Posterior cingulate gyrus (tissue), 11 donors: ENCODE measurements at regions of chr1 and their contacts with region 1.

Region 1: DNA sequence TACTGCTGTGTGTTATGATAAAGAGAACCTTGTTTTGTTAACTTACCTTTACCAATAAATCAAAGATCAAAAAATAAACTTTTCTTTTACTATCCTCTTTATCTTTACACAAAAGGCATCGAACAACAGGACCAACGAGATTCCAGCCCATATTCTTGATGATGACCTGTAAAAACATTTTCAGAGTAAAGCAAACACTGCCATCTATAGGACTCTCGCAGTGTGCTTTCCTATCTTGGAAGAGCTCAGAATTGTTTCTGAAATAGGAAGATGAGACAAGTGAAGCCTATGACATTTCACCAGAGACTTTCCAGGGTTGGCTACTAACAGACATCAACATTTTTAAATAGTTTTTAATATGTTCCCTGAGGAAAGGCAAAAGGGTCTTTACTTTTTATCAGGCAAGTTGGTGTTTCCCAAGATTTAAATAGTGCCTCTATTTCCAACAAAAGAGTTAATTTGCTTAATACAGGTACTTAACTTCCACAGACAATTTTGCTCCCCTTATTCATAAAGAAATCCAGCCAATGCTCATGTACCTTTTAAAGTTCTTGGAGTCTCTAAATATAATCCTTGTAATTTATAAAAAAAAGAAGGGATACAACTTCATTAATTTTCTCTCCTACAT is 7.3 kb downstream of the GLMN start:
- DNase-seq: no peak

Region 2: DNA sequence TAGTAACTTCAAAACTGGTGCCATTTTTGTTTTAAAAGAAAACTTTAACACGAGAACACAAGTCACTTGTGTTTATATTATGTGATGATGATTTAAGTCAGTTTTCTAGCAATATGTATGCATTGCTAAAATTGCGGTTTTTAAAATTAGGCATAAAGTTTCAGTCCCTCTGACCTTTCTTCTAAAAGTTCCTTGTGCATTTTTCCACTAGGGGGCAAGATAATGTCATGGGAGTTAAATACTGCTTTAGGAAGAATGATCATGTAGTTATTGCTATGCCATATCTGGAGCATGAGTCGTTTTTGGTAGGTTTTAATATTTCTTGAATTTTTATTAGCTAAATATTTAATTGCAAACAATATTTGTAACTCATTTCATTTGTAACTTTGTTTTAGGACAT is 780.1 kb before region 1 on chr1:
- intact Hi-C with region 1: loop called (anchors 5 kb)
- DNase-seq: no peak

Region 3: GRCh38 chr1:91997607-91998195 is 293.8 kb before region 1 on chr1:
- intact Hi-C with region 1: loop called (anchors 5 kb)
- DNase-seq: peak in 2 of 10 donors; percentile 30 to 42

Region 4: GRCh38 chr1:92230736-92231135 is 60.8 kb before region 1 on chr1:
- intact Hi-C with region 1: no loop called
- DNase-seq: no peak

Region 5: GRCh38 chr1:92356956-92357355 is 65.5 kb after region 1 on chr1:
- intact Hi-C with region 1: no loop called
- DNase-seq: no peak

Region 6: DNA sequence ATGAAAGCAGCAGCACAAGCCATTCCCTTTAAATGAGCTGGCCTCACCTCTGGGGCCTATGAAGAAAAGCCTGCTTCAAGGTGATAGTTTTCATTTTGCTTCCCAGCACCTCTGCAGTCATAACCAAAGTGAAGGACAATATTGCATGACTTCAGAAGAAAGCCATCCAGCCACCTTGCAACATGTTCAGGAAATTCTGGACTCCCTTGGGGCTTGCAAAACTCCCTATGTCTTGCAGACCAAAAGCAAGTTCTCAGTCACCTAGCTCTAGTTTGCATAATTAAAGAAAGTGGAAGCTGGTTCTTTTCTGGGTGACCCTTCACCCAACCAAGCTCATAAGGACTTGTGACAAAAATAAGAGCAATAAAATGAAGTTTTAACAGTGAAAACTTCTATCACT is 107.6 kb after region 1 on chr1:
- intact Hi-C with region 1: no loop called
- DNase-seq: no peak